ENCODE measurements at regions of chr7 and their contacts with region 1.

Region 1: GRCh38 chr7:37408291-37409228 is 40.1 kb downstream of the ELMO1 start:
- DNase-seq: no peak
- H3K4me3 Mint-ChIP-seq: peak overlapping the region; percentile 80
- H3K27ac Mint-ChIP-seq: peak overlapping the region; percentile 90
- H3K4me1 Mint-ChIP-seq: peaks cover 55% of the 10 kb centered on the region
- H3K27me3 Mint-ChIP-seq: no peaks in the 10 kb centered on the region

Region 2: GRCh38 chr7:37365405-37365804 is 43.2 kb before region 1 on chr7:
- intact Hi-C with region 1: loop called (anchors 2 kb)
- DNase-seq: no peak
- H3K4me3 Mint-ChIP-seq: no peak overlapping the region
- H3K27ac Mint-ChIP-seq: no peak overlapping the region
- H3K4me1 Mint-ChIP-seq: peaks cover 55% of the 10 kb centered on the region
- H3K27me3 Mint-ChIP-seq: peaks cover 25% of the 10 kb centered on the region

Region 3: DNA sequence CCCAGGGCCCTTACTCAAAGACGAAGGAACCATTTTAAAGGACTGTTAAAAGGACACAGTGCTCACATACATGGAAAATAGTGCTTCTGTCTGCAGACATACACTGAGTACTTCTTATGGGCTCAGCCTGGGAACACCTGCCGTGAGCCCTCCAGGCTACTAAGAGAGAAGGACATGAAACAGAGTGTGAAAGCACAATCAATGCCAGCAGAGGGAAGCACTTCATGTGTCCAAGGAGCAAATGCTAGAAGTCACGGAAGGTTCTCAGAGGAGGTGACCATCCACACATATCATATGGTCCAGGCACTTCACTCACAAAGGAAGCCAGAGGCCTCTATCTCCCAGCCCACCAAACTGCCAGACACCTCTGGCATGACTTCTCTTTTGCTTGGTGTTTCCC is 24.6 kb after region 1 on chr7:
- intact Hi-C with region 1: loop called (anchors 1 kb)
- DNase-seq: no peak
- H3K4me3 Mint-ChIP-seq: no peak overlapping the region
- H3K27ac Mint-ChIP-seq: no peak overlapping the region
- H3K4me1 Mint-ChIP-seq: peaks cover 25% of the 10 kb centered on the region
- H3K27me3 Mint-ChIP-seq: peaks cover 5% of the 10 kb centered on the region

Region 4: DNA sequence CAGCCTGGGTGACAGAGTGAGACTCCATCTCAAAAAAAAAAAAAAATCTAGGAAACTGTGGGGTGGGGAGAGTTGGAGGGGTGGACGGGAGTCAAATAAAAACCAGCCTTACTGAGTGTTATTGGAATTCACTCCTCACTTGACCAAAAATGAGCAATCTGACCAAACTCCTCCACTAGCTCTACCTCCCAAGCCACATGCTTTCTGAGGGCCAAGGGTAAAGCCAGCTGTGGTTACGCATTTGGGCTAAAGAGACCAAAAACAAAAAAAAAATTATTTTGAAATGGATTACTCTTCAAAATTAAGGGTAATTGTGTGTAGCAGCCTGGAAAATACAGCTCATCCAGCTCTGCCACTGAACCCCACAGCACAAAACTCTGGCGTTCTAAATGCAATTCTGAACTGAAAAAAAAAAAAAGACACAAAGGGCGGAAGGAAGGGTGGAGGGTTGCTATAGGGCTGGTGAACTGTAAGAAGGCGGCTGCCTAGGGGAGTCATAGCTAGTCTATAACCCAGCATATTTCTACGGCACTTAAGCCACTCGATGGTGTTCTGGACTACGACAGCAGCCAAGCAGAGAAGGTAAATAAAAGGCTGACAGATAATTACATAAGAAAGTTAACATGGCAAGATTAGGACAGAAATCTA is 32.3 kb after region 1 on chr7:
- intact Hi-C with region 1: loop called (anchors 2 kb)
- DNase-seq: peak; percentile 18
- H3K4me3 Mint-ChIP-seq: peak overlapping the region; percentile 40
- H3K27ac Mint-ChIP-seq: peak overlapping the region; percentile 86
- H3K4me1 Mint-ChIP-seq: peaks cover 38% of the 10 kb centered on the region
- H3K27me3 Mint-ChIP-seq: no peaks in the 10 kb centered on the region

Measured in activated T-helper 2 cell treated with anti-CD3 and anti-CD28 coated beads, Interferon-gamma antibody, Interleukin-2, Interleukin-4, amounts not matched to agents 10 μg/mL and 5 μg/mL and 100 μg/mL, durations not matched to agents 14 hours and 24 hours and 36 hours (primary cell).